Activated CD4-positive, alpha-beta T cell treated with anti-CD3 and anti-CD28 coated beads, Interleukin-2, amount 10 ng/mL, durations not matched to agents 7 days and 5 days (primary cell): ENCODE measurements at regions of chr10 and their contacts with region 1.

Region 1: DNA sequence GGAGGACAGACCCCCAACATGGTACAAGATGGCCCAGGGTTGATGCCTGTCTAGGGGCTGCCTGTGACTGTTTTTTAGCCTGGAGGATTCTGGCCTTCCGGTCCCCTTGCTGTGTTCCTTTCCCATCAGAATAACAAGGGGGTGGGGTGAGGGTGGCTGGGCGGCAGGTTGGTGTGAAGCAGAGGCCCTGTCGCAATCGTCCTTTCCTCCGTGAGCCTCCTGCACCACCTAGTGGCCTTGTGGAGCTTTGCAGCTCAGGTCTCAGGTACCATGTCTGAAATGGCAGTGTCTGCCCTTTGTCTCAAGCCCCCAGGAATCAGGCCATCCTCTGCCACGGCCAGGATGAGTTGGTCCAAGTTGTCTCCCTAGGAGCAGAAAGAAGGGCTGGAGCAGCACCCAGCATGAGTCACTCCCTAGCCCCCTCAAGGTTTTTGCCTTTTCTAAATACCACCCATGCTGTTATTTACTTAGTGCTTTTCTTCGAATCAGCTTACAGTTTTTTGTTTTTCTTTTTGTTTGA is 24.2 kb downstream of the TACR2 start:
- DNase-seq: peak; percentile 88
- H3K4me3 Mint-ChIP-seq: no peak overlapping the region
- H3K27ac Mint-ChIP-seq: peak overlapping the region; percentile 62
- H3K4me1 Mint-ChIP-seq: peaks cover 31% of the 10 kb centered on the region
- H3K27me3 Mint-ChIP-seq: no peaks in the 10 kb centered on the region

Region 2: DNA sequence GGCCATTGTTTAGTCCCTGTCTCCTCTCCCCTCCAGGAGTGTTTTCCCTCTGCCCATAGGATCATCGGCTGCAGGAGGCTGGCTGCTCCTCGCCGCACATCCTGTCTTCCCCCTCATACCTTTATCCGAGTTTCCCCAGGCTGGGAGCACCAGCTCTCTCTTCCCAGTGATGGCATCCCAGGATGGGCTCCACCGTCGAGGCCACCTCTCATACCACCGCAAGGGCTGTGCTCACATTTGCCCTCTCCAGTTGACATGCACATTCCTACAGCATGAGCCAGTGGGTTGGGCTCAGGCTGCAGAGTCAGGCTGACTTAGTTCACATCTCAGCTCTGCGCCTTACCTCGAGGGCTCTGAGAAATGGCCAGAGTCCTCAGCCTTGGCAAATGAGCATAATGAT is 160.3 kb before region 1 on chr10:
- CTCF ChIA-PET with region 1: interaction called, 25 read pairs
- POLR2A ChIA-PET with region 1: no interaction called
- DNase-seq: no peak
- H3K4me3 Mint-ChIP-seq: peak overlapping the region; percentile 74
- H3K27ac Mint-ChIP-seq: peak overlapping the region; percentile 91
- H3K4me1 Mint-ChIP-seq: peaks cover 76% of the 10 kb centered on the region
- H3K27me3 Mint-ChIP-seq: peaks cover 1% of the 10 kb centered on the region

Region 3: GRCh38 chr10:69237528-69238159 is 154.9 kb before region 1 on chr10:
- CTCF ChIA-PET with region 1: interaction called, 25 read pairs
- POLR2A ChIA-PET with region 1: no interaction called
- DNase-seq: peak; percentile 90
- H3K4me3 Mint-ChIP-seq: no peak overlapping the region
- H3K27ac Mint-ChIP-seq: no peak overlapping the region
- H3K4me1 Mint-ChIP-seq: peaks cover 40% of the 10 kb centered on the region
- H3K27me3 Mint-ChIP-seq: no peaks in the 10 kb centered on the region

Region 4: DNA sequence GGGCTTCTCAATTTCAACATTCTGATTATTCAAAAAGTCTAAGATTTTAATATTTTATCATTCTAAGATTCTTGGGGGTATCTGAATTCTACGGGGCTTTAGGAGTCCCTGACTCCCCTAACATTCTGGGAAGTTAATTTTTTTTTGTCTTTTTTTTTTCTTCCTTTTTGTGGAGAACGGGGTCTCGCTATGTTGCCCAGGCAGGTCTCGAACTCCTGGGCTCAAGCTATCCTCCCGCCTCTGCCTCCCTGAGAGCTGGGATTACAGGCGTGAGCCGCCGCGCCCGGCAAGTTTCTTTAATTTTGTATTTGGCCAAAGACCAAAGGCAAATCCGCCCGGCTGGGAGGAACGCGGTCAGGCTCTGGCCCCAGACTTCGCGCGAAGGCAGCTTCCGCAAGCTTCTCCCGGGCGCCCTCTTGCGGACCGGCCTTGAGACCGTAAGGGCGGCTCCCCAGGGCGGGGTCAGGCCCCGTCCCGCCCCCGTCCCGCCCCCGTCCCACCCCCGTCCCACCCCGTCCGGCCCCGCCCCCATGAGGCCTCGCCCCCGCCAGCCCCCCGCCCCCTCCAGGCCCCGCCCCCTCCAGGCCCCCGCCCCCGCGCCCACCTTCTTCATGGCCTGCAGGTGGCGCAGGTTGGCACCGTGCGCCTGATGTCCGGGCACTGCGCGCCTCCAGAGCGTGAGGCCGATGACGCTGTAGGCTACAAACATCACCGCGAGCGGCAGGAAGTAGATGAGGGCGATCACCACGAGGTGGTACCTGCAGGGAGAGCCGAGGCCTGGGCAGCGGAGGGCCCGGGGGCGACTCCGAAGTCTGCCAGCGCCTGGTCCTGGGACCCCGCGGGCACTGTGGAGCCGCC is 16.0 kb after region 1 on chr10:
- CTCF ChIA-PET with region 1: interaction called, 37 read pairs
- POLR2A ChIA-PET with region 1: no interaction called
- DNase-seq: peak; percentile 92
- H3K4me3 Mint-ChIP-seq: peak overlapping the region; percentile 63
- H3K27ac Mint-ChIP-seq: peak overlapping the region; percentile 88
- H3K4me1 Mint-ChIP-seq: peaks cover 26% of the 10 kb centered on the region
- H3K27me3 Mint-ChIP-seq: no peaks in the 10 kb centered on the region

Region 5: GRCh38 chr10:69461243-69462025 is 68.9 kb after region 1 on chr10:
- CTCF ChIA-PET with region 1: no interaction called
- POLR2A ChIA-PET with region 1: no interaction called
- DNase-seq: no peak
- H3K4me3 Mint-ChIP-seq: no peak overlapping the region
- H3K27ac Mint-ChIP-seq: no peak overlapping the region
- H3K4me1 Mint-ChIP-seq: peaks cover 43% of the 10 kb centered on the region
- H3K27me3 Mint-ChIP-seq: no peaks in the 10 kb centered on the region